ENCODE measurements at regions of chr22 and their contacts with region 1.

Region 1: DNA sequence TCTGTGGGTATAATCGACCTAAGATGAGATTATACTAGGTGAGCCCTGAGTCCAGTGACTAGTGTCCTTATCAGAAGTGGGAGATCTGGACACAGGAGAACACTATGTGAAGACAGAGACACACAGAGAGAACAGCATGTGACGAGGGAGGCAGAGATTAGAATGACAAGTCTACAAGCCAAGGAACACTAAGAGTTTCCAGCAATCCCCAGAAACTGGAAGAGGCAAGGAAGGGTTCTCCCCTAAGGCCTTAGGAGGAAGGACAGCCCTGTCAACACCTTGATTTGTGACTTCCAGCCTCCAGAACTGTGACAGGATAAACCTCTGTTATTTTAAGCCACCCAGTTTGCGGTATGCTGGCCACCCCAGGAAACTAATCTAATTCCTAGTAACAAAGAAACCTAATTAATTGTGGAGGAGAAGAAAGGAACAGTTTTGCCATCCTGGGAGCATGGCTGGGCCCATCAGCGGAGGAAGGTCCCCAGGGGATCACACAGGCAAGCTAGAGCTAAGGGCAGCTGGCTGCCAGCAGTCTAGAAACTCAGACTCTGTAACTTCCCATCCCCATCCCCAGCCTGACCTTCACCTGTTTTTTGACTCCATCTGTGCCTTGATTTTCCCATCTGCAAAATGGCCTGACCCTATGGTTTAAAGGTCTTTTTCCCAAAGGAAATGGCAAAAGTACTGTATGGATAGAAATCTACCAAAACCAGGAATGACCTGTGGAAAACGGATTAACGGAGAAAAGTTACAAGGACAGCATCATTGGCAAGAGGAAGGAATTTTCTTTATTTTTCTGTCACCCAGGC is 10.3 kb upstream of the THOC5 start:
- DNase-seq: no peak
- H3K4me3 Mint-ChIP-seq: no peak overlapping the region
- H3K27ac Mint-ChIP-seq: no peak overlapping the region
- H3K4me1 Mint-ChIP-seq: peaks cover 3% of the 10 kb centered on the region
- H3K27me3 Mint-ChIP-seq: no peaks in the 10 kb centered on the region
- CTCF ChIP-seq: no peak

Region 2: GRCh38 chr22:29553351-29554224 is 10.3 kb before region 1 on chr22 and contains the start of gene THOC5:
- CTCF ChIA-PET with region 1: interaction called, 13 read pairs
- POLR2A ChIA-PET with region 1: interaction called, 10 read pairs
- intact Hi-C with region 1: no loop called
- DNase-seq: peak; percentile 97
- H3K4me3 Mint-ChIP-seq: peak within 1 kb of the TSS; percentile 82
- H3K27ac Mint-ChIP-seq: peak within 1 kb of the TSS; percentile 90
- H3K4me1 Mint-ChIP-seq: peaks cover 19% of the 10 kb centered on the region
- H3K27me3 Mint-ChIP-seq: no peaks in the 10 kb centered on the region
- CTCF ChIP-seq: peak; percentile 23
- total RNA-seq, gene THOC5: 50.3 and 51.3 TPM in 2 replicates

Region 3: DNA sequence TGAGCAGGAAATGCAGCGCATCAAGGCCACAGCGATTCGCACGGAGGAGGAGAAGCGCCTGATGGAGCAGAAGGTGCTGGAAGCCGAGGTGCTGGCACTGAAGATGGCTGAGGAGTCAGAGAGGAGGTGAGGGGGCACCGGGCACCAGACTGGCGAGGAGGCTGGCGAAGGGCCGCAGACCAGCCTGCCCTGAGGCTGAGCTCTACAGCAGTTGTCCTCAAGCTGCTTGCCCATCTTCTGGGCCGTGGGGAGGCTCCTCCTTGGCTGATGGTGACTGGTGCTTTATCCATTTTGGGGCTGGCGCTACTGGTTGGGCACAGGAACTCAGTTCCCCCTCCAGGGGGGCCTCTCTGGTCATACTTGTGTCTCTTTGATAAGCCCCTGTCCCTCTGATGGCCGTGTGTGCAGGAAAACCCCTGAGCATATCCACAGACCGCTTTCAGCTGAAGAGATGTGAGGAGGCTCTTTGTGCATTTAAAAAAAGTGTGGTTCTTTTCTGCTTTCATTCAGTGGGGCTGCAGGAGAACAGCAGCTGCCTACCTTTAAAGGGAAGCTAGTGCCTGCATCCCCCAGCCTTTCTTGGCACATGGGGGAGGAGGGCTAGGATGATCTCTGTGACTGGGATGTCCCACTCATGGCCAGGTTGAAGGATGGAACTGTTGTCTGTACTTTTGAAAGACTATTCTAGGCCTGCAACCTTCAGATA is 109.7 kb after region 1 on chr22:
- CTCF ChIA-PET with region 1: no interaction called
- POLR2A ChIA-PET with region 1: no interaction called
- intact Hi-C with region 1: no loop called
- DNase-seq: no peak
- H3K4me3 Mint-ChIP-seq: no peak overlapping the region
- H3K27ac Mint-ChIP-seq: no peak overlapping the region
- H3K4me1 Mint-ChIP-seq: no peaks in the 10 kb centered on the region
- H3K27me3 Mint-ChIP-seq: no peaks in the 10 kb centered on the region
- CTCF ChIP-seq: no peak